ENCODE measurements at regions of chr14 and their contacts with region 1.

Region 1: GRCh38 chr14:21092273-21093011 is 6.0 kb downstream of the ZNF219 start:
- DNase-seq: peak; percentile 86 to 91 (median 90)
- H3K4me3 ChIP-seq: no peak overlapping the region
- H3K4me3 Mint-ChIP-seq: peak overlapping the region in 2 of 8 donors; percentile 2 to 72
- H3K27ac ChIP-seq: peak overlapping the region; percentile 17
- H3K27ac Mint-ChIP-seq: peak overlapping the region in 6 of 7 donors; percentile 79 to 97 (median 94)
- H3K4me1 ChIP-seq: peaks cover 21% of the 10 kb centered on the region
- H3K4me1 Mint-ChIP-seq: peaks cover 17 to 50% (median 29%) of the 10 kb centered on the region in 4 donors
- H3K27me3 ChIP-seq: no peaks in the 10 kb centered on the region
- H3K27me3 Mint-ChIP-seq: no peaks in the 10 kb centered on the region

Region 2: DNA sequence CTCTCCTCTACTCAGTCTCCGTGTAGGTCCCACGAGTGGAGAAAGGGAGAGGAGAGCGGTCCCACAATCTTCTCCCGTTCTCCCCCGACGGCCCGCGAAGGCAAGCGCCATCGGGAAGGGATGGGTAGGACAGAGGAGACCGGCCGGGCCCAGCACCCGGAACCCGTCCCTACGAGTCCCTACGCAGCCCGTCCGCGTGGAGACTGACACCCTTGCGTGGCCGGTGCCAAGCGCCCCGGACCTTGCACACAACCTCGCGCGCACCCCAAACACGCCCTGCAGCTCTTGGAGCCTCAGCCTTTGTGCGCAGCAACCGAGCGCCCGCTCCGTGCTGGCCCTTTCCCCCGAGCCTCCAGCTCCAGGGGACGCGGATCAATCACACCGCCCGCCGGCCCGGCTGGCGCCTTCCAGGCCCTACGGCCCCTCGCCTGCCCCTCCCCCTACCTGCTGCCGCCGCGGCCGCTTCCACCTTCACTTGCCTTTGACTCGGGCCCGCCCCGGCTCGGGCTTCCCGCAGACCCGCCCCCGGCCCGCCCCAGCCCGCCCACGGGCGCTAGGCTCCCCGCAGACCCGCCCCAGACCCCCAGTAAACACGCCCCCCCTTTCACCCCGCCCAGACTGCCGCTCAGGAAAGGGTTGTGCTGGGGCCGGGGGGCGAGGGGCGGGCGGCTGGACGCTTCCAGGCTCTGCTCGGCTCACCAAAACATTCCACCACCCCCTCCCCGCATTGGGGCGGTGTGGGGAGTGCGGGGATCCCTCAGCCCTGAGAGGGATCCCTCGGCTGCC is 67.7 kb before region 1 on chr14 and contains the start of gene NDRG2:
- CTCF ChIA-PET with region 1: interaction called, 226 read pairs
- POLR2A ChIA-PET with region 1: interaction called, 4 read pairs
- intact Hi-C with region 1: loop called (anchors 2 kb)
- DNase-seq: peak; percentile 71 to 79 (median 72)
- H3K4me3 ChIP-seq: peak within 1 kb of the TSS; percentile 69 to 77
- H3K4me3 Mint-ChIP-seq: peak within 1 kb of the TSS; percentile 83 to 95 (median 91)
- H3K27ac ChIP-seq: peak within 1 kb of the TSS; percentile 51
- H3K27ac Mint-ChIP-seq: peak within 1 kb of the TSS; percentile 77 to 93 (median 92)
- H3K4me1 ChIP-seq: peaks cover 20% of the 10 kb centered on the region
- H3K4me1 Mint-ChIP-seq: peaks cover 12 to 33% (median 22%) of the 10 kb centered on the region in 4 donors
- H3K27me3 ChIP-seq: no peaks in the 10 kb centered on the region
- H3K27me3 Mint-ChIP-seq: no peaks in the 10 kb centered on the region
- total RNA-seq, gene NDRG2: 31.9 to 32.4 TPM

Region 3: GRCh38 chr14:21039585-21040369 is 52.7 kb before region 1 on chr14:
- CTCF ChIA-PET with region 1: interaction called, 16 read pairs
- POLR2A ChIA-PET with region 1: no interaction called
- intact Hi-C with region 1: no loop called
- DNase-seq: peak in 4 of 5 donors; percentile 40 to 51 (median 44)
- H3K4me3 ChIP-seq: no peak overlapping the region
- H3K4me3 Mint-ChIP-seq: no peak overlapping the region
- H3K27ac ChIP-seq: no peak overlapping the region
- H3K27ac Mint-ChIP-seq: peak overlapping the region in 2 of 7 donors; percentile 13 to 39
- H3K4me1 ChIP-seq: peaks cover 16% of the 10 kb centered on the region
- H3K4me1 Mint-ChIP-seq: peaks cover 9 to 35% (median 15%) of the 10 kb centered on the region in 4 donors
- H3K27me3 ChIP-seq: no peaks in the 10 kb centered on the region
- H3K27me3 Mint-ChIP-seq: no peaks in the 10 kb centered on the region

Region 4: DNA sequence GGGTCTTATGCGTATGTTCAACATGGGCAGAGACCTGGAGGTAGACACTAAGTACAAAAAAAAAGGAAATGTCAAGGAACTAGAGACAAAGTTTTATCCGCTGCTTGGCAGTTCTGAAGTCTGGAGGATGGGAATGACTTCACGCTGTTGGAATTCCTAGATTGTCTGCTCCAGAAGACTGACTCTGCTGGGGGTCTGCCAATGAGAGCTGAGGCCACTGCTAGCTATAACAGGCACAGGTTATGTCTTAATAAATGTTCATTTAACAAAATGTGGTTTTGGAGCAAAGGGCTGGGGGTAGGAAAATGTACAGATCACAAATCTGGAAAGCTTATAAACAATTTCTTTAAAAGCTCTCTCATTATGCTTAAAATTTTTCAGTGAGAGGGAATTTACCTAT is 29.0 kb before region 1 on chr14:
- CTCF ChIA-PET with region 1: interaction called, 119 read pairs
- POLR2A ChIA-PET with region 1: interaction called, 5 read pairs
- intact Hi-C with region 1: loop called (anchors 1 kb)
- DNase-seq: no peak
- H3K4me3 ChIP-seq: no peak overlapping the region
- H3K4me3 Mint-ChIP-seq: no peak overlapping the region
- H3K27ac ChIP-seq: no peak overlapping the region
- H3K27ac Mint-ChIP-seq: no peak overlapping the region
- H3K4me1 ChIP-seq: peaks cover 2% of the 10 kb centered on the region
- H3K4me1 Mint-ChIP-seq: peaks cover 1 to 3% (median 2%) of the 10 kb centered on the region in 4 donors
- H3K27me3 ChIP-seq: peaks cover 10% of the 10 kb centered on the region
- H3K27me3 Mint-ChIP-seq: peaks cover 36 to 45% of the 10 kb centered on the region in 2 donors

Region 5: DNA sequence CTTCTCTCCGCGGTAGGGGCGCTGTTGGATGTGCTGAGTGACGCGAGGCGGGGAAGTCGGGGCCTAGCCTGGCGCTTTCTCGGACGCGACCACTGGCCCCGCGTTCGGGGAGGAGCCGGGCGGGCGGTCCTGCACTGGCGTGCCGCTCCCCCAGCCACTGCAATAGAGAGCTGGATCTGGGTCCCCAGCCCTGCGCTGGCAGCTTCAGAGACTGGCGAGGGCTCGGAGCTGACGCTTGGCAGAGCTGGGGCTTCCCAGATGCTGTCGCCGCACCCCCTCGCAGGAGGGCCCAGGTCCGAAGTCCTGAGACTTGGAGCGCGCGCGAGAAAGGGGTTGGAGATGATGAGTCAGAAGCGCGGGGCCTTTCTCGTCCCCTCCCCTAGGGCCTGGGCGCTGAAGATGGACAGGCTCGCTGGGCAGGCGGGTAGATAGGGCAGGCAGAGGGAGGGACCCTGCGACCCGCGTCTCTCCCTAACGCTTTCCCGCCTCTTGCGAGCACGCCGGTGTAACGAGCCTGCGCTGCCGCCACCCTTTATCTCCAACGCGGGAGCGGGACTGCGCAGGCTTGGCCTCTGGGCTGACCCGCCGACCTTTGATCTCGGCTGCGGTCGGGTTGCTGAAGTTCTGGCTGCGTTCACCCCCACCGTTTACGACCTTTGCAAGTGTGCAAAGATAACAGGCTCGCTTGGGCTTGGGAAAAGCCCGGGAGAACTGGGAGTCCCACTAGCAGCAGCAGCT is 11.4 kb after region 1 on chr14:
- CTCF ChIA-PET with region 1: interaction called, 296 read pairs
- POLR2A ChIA-PET with region 1: interaction called, 82 read pairs
- intact Hi-C with region 1: loop called (anchors 1 kb)
- DNase-seq: peak; percentile 92 to 95 (median 95)
- H3K4me3 ChIP-seq: peak overlapping the region; percentile 96
- H3K4me3 Mint-ChIP-seq: peak overlapping the region; percentile 85 to 94 (median 90)
- H3K27ac ChIP-seq: peak overlapping the region; percentile 90
- H3K27ac Mint-ChIP-seq: peak overlapping the region; percentile 91 to 99 (median 97)
- H3K4me1 ChIP-seq: peaks cover 29% of the 10 kb centered on the region
- H3K4me1 Mint-ChIP-seq: peaks cover 15 to 40% (median 23%) of the 10 kb centered on the region in 4 donors
- H3K27me3 ChIP-seq: no peaks in the 10 kb centered on the region
- H3K27me3 Mint-ChIP-seq: no peaks in the 10 kb centered on the region

Measured in CD4-positive, alpha-beta memory T cell (primary cell).